Activated T-helper 1 cell treated with anti-CD3 and anti-CD28 coated beads, Interleukin-12 subunit alpha, Interleukin-12 subunit beta, Interleukin-2, Interleukin-4 antibody, amounts not matched to agents 30 ng/mL and 10 ng/mL and 1 ng/mL, durations not matched to agents 14 hours and 24 hours and 36 hours (primary cell): ENCODE measurements at regions of chrX and their contacts with region 1.

Region 1: DNA sequence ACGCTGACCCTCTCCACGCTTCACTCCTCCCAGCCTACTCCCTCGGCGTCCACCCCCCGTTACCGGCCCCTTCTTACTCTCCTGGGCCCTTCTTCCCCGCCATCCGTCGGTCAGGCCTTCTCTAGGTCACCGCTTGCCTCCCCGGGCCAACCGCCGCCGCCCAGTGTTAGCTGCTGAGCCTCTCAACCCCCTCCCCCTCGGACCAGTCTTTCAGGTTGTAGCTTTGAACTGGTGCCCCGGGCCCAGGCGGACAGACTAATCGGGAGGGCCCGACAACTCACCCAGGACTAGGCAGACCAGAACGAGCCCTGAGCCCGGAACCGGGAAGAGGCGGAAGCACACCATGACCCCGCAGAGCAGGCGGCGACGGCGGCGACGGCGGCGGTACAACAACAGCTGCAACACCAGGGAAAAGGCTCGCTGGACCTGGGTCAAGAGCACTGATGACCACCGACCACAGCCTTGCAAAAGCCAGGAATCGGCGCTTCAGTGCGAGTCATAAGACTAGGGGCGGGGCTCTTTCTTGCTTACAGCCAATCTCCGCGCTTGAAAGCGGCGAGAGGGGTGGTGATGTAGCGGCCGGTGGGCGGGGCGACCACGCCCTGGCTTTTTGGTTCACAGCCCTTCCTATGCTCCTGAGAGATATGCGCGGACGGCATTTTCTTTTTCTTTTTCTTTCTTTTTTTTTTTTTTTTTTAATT is at the start of gene LAMP2:
- DNase-seq: peak; percentile 75
- H3K4me3 Mint-ChIP-seq: peak within 1 kb of the TSS; percentile 90
- H3K27ac Mint-ChIP-seq: peak within 1 kb of the TSS; percentile 89
- H3K4me1 Mint-ChIP-seq: peaks cover 11% of the 10 kb centered on the region
- H3K27me3 Mint-ChIP-seq: no peaks in the 10 kb centered on the region
- total RNA-seq, gene LAMP2: 42.7 and 44.1 TPM in 2 replicates

Region 2: DNA sequence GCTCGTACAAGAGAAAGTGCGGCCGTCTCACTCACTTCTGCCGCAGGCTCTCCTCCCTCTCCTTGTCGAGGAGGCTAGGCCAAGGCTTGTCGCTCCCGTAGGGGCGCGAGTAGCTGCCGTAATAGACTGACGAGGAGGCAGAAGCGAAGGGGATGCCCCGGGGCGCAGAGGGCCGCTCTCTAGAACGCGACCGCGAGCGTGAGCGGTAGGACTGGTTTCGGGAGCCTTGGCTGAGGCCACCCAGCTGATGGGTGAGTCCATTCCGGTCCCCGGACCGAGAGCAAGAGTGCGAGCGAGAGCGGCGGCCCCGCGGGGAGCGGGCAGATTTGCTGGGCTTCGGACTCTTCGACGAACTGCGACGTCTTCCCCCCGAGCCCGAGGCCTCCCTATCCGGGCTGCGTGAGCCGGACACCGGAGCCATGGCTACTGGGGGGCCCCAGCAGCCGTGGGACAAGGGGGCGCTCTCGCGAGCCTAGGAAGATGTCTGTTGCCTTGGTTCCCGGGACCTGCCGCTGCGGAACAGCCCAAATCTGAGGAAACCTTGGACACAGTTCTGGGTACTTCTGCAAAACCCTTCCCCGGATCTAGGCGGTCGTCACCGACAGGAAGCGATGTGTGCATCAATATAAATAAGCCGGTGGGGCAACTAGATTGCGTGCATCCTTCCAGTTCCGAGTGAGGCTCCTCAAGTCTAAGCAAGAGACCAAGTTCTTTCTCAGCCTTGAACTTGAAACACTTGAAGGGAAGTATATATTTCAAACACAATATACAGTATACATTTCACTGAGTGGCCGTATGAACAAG is 525.6 kb before region 1 on chrX and contains the start of gene NKAP:
- intact Hi-C with region 1: no loop called
- DNase-seq: peak; percentile 78
- H3K4me3 Mint-ChIP-seq: peak within 1 kb of the TSS; percentile 93
- H3K27ac Mint-ChIP-seq: peak within 1 kb of the TSS; percentile 97
- H3K4me1 Mint-ChIP-seq: peaks cover 16% of the 10 kb centered on the region
- H3K27me3 Mint-ChIP-seq: peaks cover 2% of the 10 kb centered on the region
- total RNA-seq, gene NKAP: 9.4 and 10.1 TPM in 2 replicates

Region 3: DNA sequence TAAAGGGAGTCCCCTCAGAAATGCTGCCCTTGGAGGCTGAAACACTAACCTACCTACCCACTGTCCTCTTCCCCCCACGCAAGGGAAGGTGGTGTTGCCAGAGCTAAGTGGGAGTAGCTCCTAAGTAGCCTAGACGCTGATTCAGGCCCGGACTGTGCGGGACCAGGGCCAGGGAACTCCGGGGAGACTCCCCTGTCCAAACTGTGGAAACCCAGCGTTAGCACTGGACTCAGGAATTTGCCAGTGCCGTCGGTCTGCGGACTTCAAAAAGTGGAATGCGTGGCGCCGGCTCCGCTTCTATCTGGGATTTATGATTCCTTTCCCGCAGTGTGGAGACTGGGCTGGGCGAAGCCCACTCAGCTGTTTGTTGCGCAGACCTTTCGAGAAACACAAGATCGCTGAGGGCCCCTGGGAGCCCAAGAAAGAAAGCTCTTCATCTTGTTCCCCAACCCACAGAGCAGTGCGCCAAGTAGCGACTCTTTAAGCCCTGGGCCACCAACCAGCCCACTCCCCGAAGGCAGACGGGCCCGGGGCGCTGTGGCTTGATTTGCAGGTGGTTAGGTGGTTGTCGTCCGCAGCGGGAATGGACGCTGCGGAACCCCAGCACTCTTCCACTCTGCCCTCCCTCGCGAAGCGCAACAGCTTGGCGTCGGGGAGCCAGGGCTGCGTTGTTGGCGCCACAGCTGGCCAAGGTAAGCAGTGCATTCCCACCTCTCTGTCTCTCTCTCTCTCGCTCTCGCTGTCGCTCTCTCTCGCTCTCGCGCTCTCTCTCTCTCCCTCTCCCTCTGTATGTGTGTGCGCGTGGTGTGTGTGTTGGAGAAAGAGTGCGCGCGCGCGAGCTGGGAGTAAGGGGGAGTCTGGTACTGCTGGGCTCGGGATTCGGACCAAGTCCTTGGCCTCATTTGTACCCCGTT is 159.8 kb before region 1 on chrX:
- intact Hi-C with region 1: loop called (anchors 5 kb)
- DNase-seq: peak; percentile 55
- H3K4me3 Mint-ChIP-seq: peak overlapping the region; percentile 88
- H3K27ac Mint-ChIP-seq: peak overlapping the region; percentile 87
- H3K4me1 Mint-ChIP-seq: peaks cover 21% of the 10 kb centered on the region
- H3K27me3 Mint-ChIP-seq: peaks cover 60% of the 10 kb centered on the region

Region 4: GRCh38 chrX:120452131-120452530 is 16.8 kb before region 1 on chrX:
- intact Hi-C with region 1: loop called (anchors 2 kb)
- DNase-seq: no peak
- H3K4me3 Mint-ChIP-seq: no peak overlapping the region
- H3K27ac Mint-ChIP-seq: peak overlapping the region; percentile 21
- H3K4me1 Mint-ChIP-seq: peaks cover 16% of the 10 kb centered on the region
- H3K27me3 Mint-ChIP-seq: no peaks in the 10 kb centered on the region

Region 5: DNA sequence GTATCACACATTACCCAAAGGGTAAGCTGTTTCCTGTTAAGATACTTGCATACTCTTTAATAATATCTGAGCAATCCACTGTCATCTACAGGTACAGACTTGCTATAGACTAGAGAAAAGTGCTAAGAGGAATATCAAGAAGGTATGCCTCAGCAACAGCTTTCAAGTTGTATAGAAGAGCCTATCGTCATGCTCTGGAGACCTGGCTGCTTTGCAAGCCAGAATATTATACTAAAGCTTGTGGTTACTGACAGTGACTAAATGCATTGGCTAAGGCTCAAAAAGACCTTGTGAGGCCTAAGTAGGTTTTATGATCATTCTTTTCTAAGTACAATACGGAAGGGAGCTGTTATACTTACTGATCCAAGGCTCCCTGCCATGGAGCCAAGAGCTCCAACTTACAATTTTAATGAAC is 11.2 kb before region 1 on chrX:
- intact Hi-C with region 1: loop called (anchors 1 kb)
- DNase-seq: no peak
- H3K4me3 Mint-ChIP-seq: peak overlapping the region; percentile 50
- H3K27ac Mint-ChIP-seq: peak overlapping the region; percentile 59
- H3K4me1 Mint-ChIP-seq: peaks cover 39% of the 10 kb centered on the region
- H3K27me3 Mint-ChIP-seq: no peaks in the 10 kb centered on the region

Region 6: DNA sequence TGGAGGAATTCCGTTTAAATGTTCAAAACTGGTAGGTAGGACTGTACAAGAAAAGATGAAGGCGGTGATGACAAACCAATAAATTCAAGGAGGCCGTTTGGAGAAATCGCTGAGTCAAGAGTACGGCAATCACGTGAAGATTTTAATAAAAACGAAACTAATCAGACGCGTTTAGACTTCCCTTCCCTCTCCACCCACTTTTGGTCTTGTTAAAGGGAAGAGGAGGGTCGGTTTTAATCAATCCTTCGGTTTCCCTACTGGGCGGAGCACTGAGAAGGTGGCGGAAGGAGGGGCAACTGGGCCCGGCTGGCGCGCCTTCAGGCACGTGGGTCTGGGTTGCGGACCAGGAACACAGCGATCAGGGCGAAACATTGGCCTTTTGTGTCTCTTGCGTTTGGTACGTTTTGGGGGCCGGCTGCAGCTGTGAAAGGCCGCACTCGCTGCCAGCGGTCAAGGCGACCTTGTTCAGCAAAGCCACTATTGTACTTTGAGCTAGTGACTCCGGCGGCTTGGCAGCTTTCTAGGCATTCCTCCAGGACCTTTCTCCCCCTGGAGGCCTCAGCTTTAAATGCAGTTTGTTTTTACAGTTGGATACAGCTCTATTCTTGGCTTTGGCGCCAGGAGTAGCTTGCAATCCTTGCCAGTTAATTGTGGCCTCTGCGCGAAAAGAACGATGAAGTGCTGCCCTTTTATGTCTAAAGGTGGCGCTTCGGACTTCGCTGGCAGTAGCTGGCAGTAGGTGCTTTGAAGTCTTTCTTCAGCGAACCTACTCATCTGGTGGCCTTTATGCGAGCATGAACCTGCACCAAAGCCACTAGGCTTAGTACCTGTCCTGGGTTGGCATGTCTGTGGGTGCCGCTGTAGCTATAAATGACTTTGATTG is 16.9 kb after region 1 on chrX:
- intact Hi-C with region 1: loop called (anchors 1 kb)
- DNase-seq: peak; percentile 40
- H3K4me3 Mint-ChIP-seq: peak overlapping the region; percentile 77
- H3K27ac Mint-ChIP-seq: peak overlapping the region; percentile 76
- H3K4me1 Mint-ChIP-seq: peaks cover 12% of the 10 kb centered on the region
- H3K27me3 Mint-ChIP-seq: no peaks in the 10 kb centered on the region

Region 7: DNA sequence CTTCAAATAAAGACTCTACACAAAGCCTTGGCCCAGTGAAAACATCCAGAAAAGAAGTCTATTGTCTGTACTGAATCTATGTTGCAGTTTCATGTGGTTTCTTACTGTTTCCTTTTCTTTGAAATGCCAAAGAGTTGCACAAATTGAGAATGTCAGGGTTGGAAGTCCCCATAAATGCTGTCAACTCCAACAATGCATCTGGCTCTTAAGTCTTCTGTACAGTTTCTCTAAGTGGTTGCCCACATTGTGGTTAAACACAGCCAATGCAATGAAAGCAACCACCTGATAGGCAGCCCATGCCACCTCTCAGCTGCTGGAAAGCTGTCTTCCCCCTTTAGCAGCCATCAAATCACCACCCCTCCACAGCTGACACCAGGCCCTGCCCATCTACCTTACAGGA is 228.1 kb after region 1 on chrX:
- intact Hi-C with region 1: loop called (anchors 1 kb)
- DNase-seq: peak; percentile 62
- H3K4me3 Mint-ChIP-seq: peak overlapping the region; percentile 38
- H3K27ac Mint-ChIP-seq: peak overlapping the region; percentile 93
- H3K4me1 Mint-ChIP-seq: peaks cover 21% of the 10 kb centered on the region
- H3K27me3 Mint-ChIP-seq: no peaks in the 10 kb centered on the region